Heart right ventricle (tissue), 16 donors: ENCODE measurements at regions of chr9 and their contacts with region 1.

Region 1: GRCh38 chr9:130433168-130433946 is 11.4 kb upstream of the ASS1 start:
- DNase-seq: peak in 1 of 2 donors; percentile 64
- ATAC-seq: peak; percentile 75 to 90 (median 84)
- H3K4me3 ChIP-seq: peak overlapping the region in 9 of 10 donors; percentile 5 to 50 (median 37)
- H3K27ac ChIP-seq: no peak overlapping the region
- H3K4me1 ChIP-seq: peaks cover 0 to 14% (median 7%) of the 10 kb centered on the region in 9 donors
- H3K27me3 ChIP-seq: peaks cover 0 to 26% (median 18%) of the 10 kb centered on the region in 7 donors
- CTCF ChIP-seq: peak; percentile 50 to 83 (median 69)

Region 2: GRCh38 chr9:130235897-130236668 is 197.3 kb before region 1 on chr9:
- intact Hi-C with region 1: no loop called
- DNase-seq: peak; percentile 54 to 65
- ATAC-seq: peak; percentile 27 to 75 (median 54)
- H3K4me3 ChIP-seq: peak overlapping the region in 1 of 10 donors; percentile 22
- H3K27ac ChIP-seq: no peak overlapping the region
- H3K4me1 ChIP-seq: peaks cover 0 to 15% (median 5%) of the 10 kb centered on the region in 9 donors
- H3K27me3 ChIP-seq: no peaks in the 10 kb centered on the region
- CTCF ChIP-seq: peak; percentile 98 to 100 (median 99)

Region 3: DNA sequence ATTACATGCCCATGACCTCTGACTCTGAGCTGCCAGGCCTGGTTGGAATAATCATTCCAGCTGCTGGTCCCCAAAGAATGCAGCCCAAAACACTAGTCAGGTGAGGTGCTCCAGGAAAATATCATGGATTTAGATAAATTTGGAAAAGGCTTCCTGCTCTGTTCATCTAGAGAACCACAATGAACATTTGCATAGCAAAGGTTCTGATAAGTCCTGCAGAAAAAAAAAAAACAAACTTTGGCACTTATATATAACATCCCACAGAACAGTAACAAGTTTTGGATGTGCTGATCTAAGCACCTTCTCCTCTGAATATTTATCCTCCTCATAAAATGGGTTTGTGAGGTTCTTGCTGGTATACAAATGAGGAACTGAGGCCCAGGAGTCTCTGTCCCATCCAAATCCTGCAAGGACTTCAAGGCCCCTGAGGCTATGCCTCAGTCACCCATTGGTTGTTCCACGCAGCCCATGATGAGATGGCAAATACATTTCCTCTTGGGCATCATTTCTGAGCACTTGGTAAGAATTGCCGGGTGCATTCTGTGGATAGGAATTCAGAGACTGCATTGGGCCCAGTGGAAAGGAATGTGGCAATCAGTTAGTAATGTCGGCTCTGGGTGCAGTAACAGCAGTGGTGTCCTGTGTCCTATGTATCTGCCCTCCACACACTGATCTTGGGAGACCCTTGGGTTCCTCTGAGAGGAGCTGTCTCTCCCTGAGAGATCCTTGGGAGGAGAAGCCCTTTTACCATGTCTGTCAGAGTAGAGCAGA is 62.0 kb before region 1 on chr9:
- intact Hi-C with region 1: loop called in 1 of 10 experiments (anchors 10 kb)
- DNase-seq: no peak
- ATAC-seq: no peak
- H3K4me3 ChIP-seq: no peak overlapping the region
- H3K27ac ChIP-seq: no peak overlapping the region
- H3K4me1 ChIP-seq: no peaks in the 10 kb centered on the region
- H3K27me3 ChIP-seq: no peaks in the 10 kb centered on the region
- CTCF ChIP-seq: no peak